ENCODE measurements at regions of chr13 and their contacts with region 1.

Region 1: DNA sequence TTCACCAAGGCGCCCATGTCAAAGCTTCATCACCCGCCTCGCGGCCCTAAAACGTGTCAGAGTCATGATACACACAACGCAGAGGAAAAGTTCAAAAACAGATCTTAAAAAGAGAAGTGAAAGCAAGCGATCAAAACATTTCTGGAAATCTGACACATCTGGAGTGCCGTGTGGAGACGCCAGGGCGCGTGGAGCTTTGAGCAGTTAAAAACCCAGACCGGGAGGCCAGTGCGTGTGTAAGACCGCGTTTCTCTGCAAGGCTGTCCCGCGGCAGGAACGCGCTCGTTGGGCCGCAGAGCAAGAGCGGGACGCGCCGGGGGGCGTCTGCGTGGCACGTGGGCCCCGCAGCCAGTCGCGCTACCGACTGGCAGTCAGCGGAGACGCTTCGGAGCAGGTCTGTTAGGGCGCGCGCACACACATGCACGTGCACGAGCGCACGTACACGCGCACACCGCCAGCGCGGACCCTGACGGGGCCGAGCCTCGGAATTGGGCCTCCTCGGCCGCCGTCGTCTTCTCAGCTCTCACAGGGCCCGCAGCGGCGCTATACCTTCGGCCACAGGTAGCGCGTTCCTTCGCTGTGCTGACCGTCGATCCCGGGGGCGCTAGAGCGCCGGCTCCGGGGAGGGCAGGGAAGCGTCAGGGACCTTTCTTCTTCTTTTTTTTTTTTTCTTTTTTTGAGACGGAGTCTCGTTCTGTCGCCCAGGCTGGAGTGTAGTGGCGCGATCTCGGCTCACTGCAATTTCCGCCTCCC is 35.8 kb downstream of the RNF6 start:
- DNase-seq: peak; percentile 83 to 98 (median 89)
- ATAC-seq: peak; percentile 79
- H3K4me3 ChIP-seq: peak overlapping the region; percentile 77 to 82
- H3K4me3 Mint-ChIP-seq: peak overlapping the region; percentile 88
- H3K27ac ChIP-seq: peak overlapping the region; percentile 76 to 80
- H3K27ac Mint-ChIP-seq: peak overlapping the region; percentile 95
- H3K4me1 ChIP-seq: peaks cover 9% of the 10 kb centered on the region
- H3K4me1 Mint-ChIP-seq: peaks cover 36% of the 10 kb centered on the region
- H3K27me3 ChIP-seq: no peaks in the 10 kb centered on the region
- H3K27me3 Mint-ChIP-seq: no peaks in the 10 kb centered on the region
- CTCF ChIP-seq: peak; percentile 50

Region 2: GRCh38 chr13:24463078-24463477 is 1723.2 kb before region 1 on chr13:
- CTCF ChIA-PET with region 1: no interaction called
- POLR2A ChIA-PET with region 1: no interaction called
- intact Hi-C with region 1: no loop called
- DNase-seq: no peak
- ATAC-seq: no peak
- H3K4me3 ChIP-seq: no peak overlapping the region
- H3K4me3 Mint-ChIP-seq: no peak overlapping the region
- H3K27ac ChIP-seq: no peak overlapping the region
- H3K27ac Mint-ChIP-seq: peak overlapping the region; percentile 46
- H3K4me1 ChIP-seq: no peaks in the 10 kb centered on the region
- H3K4me1 Mint-ChIP-seq: peaks cover 24% of the 10 kb centered on the region
- H3K27me3 ChIP-seq: no peaks in the 10 kb centered on the region
- H3K27me3 Mint-ChIP-seq: no peaks in the 10 kb centered on the region
- CTCF ChIP-seq: no peak

Region 3: DNA sequence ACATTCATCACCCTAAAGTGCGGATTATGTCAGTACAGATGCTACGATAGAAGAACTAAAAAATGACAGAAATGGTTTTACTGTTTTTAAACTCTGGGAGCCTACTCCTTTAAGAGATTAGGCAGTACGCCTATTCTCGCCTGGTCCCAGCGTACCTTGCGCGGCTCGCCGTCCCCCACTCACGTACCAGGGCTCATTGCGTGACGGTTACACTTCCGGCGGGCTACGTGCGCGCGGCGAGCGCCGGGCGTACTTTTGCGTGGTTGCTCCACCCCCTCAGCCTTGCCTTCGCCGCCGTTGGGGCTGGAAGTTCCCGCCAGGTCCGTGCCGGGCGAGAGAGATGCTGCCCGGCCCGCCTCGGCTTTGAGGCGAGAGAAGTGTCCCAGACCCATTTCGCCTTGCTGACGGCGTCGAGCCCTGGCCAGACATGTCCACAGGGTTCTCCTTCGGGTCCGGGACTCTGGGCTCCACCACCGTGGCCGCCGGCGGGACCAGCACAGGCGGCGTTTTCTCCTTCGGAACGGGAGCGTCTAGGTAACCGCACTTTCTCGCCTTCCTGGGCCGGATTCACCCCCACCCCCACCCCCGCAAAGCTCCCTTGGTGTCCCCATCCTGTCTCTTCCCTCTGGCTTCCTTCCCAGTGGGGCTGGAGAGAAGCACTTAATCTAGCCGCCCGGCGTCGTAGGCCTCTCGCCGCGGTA is 884.8 kb before region 1 on chr13 and contains the start of gene NUP58:
- CTCF ChIA-PET with region 1: no interaction called
- POLR2A ChIA-PET with region 1: interaction called, 5 read pairs
- intact Hi-C with region 1: loop called (anchors 2 to 5 kb)
- DNase-seq: peak; percentile 83 to 98 (median 93)
- ATAC-seq: peak; percentile 99
- H3K4me3 ChIP-seq: peak within 1 kb of the TSS; percentile 81 to 84
- H3K4me3 Mint-ChIP-seq: peak within 1 kb of the TSS; percentile 95
- H3K27ac ChIP-seq: peak within 1 kb of the TSS; percentile 83 to 92
- H3K27ac Mint-ChIP-seq: peak within 1 kb of the TSS; percentile 94
- H3K4me1 ChIP-seq: peaks cover 18% of the 10 kb centered on the region
- H3K4me1 Mint-ChIP-seq: peaks cover 46% of the 10 kb centered on the region
- H3K27me3 ChIP-seq: peaks cover 0 to 5% of the 10 kb centered on the region in 2 experiments
- H3K27me3 Mint-ChIP-seq: peaks cover 8% of the 10 kb centered on the region
- CTCF ChIP-seq: no peak
- total RNA-seq, gene NUP58: 73.2 to 78.9 TPM

Region 4: GRCh38 chr13:25375727-25376358 is 810.5 kb before region 1 on chr13:
- CTCF ChIA-PET with region 1: no interaction called
- POLR2A ChIA-PET with region 1: no interaction called
- intact Hi-C with region 1: no loop called
- DNase-seq: peak in 6 of 9 experiments; percentile 3 to 58 (median 30)
- ATAC-seq: peak; percentile 36
- H3K4me3 ChIP-seq: no peak overlapping the region
- H3K4me3 Mint-ChIP-seq: no peak overlapping the region
- H3K27ac ChIP-seq: no peak overlapping the region
- H3K27ac Mint-ChIP-seq: no peak overlapping the region
- H3K4me1 ChIP-seq: no peaks in the 10 kb centered on the region
- H3K4me1 Mint-ChIP-seq: peaks cover 9% of the 10 kb centered on the region
- H3K27me3 ChIP-seq: peaks cover 5 to 20% of the 10 kb centered on the region in 2 experiments
- H3K27me3 Mint-ChIP-seq: peaks cover 43% of the 10 kb centered on the region
- CTCF ChIP-seq: peak; percentile 67

Region 5: DNA sequence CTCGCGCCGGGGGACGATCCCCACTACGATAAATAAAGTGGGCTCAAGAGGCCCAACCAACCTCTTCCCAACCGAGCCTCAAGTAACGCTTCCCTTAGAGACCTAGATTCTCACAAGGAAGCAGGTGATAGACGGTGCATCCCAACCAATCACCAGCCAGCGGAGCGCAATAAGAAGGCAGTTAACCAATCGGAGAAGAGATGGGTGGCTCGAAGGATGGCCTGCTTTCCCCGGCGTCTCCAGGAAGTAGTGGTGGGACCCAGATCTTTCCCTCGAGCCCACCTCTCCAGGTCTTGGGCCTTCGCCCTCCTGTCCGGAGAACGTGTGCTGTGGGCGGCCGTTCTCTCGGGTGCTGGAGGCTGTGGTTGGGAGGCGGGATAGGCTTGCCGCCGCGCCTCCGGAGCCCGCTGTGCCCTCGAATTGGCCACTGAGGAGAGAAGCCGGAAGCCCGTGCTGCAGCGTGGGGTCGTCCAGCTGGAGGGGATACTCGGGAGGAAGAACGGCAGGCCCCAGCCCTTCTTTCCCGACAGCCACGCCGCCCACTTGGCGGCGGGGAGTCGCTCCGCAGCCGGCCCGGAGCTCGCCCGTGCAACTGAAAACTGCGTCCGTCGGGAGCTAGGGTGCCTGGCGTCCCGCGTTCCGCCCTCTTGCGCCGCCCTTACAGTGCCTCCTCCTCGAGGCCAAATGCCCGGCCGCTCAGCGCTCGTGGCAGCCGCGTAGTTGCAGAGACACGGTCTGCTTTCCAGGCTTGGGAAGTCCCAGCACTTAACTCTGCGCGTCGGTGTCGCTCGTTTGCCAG is 35.6 kb after region 1 on chr13 and contains the start of gene RNF6:
- CTCF ChIA-PET with region 1: interaction called, 10 read pairs
- POLR2A ChIA-PET with region 1: interaction called, 19 read pairs
- intact Hi-C with region 1: loop called (anchors 1 kb)
- DNase-seq: peak; percentile 73 to 97 (median 86)
- ATAC-seq: peak; percentile 92
- H3K4me3 ChIP-seq: peak within 1 kb of the TSS; percentile 97 to 99
- H3K4me3 Mint-ChIP-seq: peak within 1 kb of the TSS; percentile 99
- H3K27ac ChIP-seq: peak within 1 kb of the TSS; percentile 90 to 98
- H3K27ac Mint-ChIP-seq: peak within 1 kb of the TSS; percentile 100
- H3K4me1 ChIP-seq: peaks cover 26% of the 10 kb centered on the region
- H3K4me1 Mint-ChIP-seq: peaks cover 45% of the 10 kb centered on the region
- H3K27me3 ChIP-seq: no peaks in the 10 kb centered on the region
- H3K27me3 Mint-ChIP-seq: no peaks in the 10 kb centered on the region
- CTCF ChIP-seq: no peak
- total RNA-seq, gene RNF6: 50.3 to 55.0 TPM

Region 6: GRCh38 chr13:26377038-26377437 is 190.7 kb after region 1 on chr13:
- CTCF ChIA-PET with region 1: no interaction called
- POLR2A ChIA-PET with region 1: no interaction called
- intact Hi-C with region 1: loop called in 1 of 2 experiments (anchors 10 kb)
- DNase-seq: peak in 4 of 9 experiments; percentile 4 to 27 (median 15)
- ATAC-seq: no peak
- H3K4me3 ChIP-seq: no peak overlapping the region
- H3K4me3 Mint-ChIP-seq: no peak overlapping the region
- H3K27ac ChIP-seq: no peak overlapping the region
- H3K27ac Mint-ChIP-seq: no peak overlapping the region
- H3K4me1 ChIP-seq: peaks cover 12% of the 10 kb centered on the region
- H3K4me1 Mint-ChIP-seq: peaks cover 28% of the 10 kb centered on the region
- H3K27me3 ChIP-seq: no peaks in the 10 kb centered on the region
- H3K27me3 Mint-ChIP-seq: no peaks in the 10 kb centered on the region
- CTCF ChIP-seq: peak; percentile 34

Region 7: GRCh38 chr13:26498656-26499591 is 312.6 kb after region 1 on chr13:
- CTCF ChIA-PET with region 1: interaction called, 185 read pairs
- POLR2A ChIA-PET with region 1: interaction called, 5 read pairs
- intact Hi-C with region 1: loop called (anchors 1 kb)
- DNase-seq: no peak
- ATAC-seq: no peak
- H3K4me3 ChIP-seq: no peak overlapping the region
- H3K4me3 Mint-ChIP-seq: no peak overlapping the region
- H3K27ac ChIP-seq: no peak overlapping the region
- H3K27ac Mint-ChIP-seq: no peak overlapping the region
- H3K4me1 ChIP-seq: no peaks in the 10 kb centered on the region
- H3K4me1 Mint-ChIP-seq: peaks cover 4% of the 10 kb centered on the region
- H3K27me3 ChIP-seq: no peaks in the 10 kb centered on the region
- H3K27me3 Mint-ChIP-seq: peaks cover 11% of the 10 kb centered on the region
- CTCF ChIP-seq: no peak

Region 8: GRCh38 chr13:26929971-26930730 is 743.9 kb after region 1 on chr13:
- CTCF ChIA-PET with region 1: interaction called, 5 read pairs
- POLR2A ChIA-PET with region 1: no interaction called
- intact Hi-C with region 1: loop called in 1 of 2 experiments (anchors 1 kb)
- DNase-seq: peak; percentile 51 to 83 (median 64)
- ATAC-seq: peak; percentile 44
- H3K4me3 ChIP-seq: no peak overlapping the region
- H3K4me3 Mint-ChIP-seq: no peak overlapping the region
- H3K27ac ChIP-seq: no peak overlapping the region
- H3K27ac Mint-ChIP-seq: no peak overlapping the region
- H3K4me1 ChIP-seq: no peaks in the 10 kb centered on the region
- H3K4me1 Mint-ChIP-seq: peaks cover 3% of the 10 kb centered on the region
- H3K27me3 ChIP-seq: peaks cover 0 to 2% of the 10 kb centered on the region in 2 experiments
- H3K27me3 Mint-ChIP-seq: peaks cover 2% of the 10 kb centered on the region
- CTCF ChIP-seq: peak; percentile 96

Measured in CD8-positive, alpha-beta T cell (primary cell).